Gastrocnemius medialis (tissue), 4 donors: ENCODE measurements at regions of chr6 and their contacts with region 1.

Region 1: DNA sequence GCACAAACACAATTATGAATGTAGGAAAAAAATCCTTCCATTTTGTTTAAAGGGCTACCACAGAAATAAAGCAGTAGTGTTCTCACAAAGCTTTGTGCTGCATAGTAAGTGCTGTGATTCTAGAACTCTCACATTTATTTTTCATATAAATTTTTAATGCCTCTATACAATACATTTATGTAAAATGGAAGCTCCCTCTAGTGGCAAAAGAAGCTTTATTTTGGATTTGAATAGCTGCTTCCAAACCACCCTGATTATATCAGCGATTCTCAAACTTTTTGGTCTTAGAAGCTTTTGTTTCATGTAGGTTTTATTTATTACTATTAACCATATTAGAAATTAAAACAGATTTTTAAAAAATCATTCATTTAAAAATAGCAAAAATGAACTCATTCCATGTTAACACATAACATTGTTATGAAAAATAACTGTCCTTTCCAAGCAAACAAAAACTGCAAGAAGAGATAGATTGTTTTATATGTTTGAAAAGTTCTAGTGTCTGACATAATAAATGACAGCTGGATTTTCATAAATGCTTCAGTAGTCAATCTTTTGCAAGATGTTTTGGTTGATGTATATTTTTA is 38.4 kb downstream of the HS3ST5 start:
- DNase-seq: no peak
- ATAC-seq: no peak
- H3K4me3 ChIP-seq: no peak overlapping the region
- H3K27ac ChIP-seq: no peak overlapping the region
- H3K4me1 ChIP-seq: peaks cover 0 to 4% of the 10 kb centered on the region in 2 donors
- H3K27me3 ChIP-seq: no peaks in the 10 kb centered on the region
- CTCF ChIP-seq: peak; percentile 26 to 56 (median 42)
- POLR2A ChIP-seq: no peak

Region 2: DNA sequence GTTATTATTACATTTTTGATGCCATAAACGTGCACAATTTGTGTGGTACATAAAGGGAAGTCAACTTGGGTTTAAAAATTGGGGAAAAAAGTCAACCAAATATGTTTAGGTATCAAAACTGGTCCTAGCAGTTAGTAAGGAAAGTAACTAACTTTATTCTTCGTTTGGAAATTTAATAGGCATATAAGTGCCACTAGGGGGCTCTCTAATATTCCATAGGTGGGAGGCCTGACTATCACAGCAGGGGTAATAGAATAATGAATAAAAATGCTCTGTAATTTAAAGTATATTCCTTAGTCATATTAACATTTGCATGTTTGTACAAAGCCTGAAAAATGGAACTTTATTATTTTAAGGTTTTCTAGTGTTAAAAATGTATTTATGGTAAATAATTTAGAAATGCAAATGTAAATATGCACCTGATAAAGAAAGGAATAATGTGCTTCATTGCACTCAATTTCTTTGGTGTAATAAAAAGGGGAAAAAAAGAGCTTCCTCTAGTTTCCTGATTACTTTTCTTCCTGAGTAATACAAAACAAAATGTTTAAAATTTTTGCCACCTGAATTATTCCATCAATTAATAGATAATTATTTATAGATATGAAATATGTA is 207.7 kb before region 1 on chr6:
- in situ Hi-C with region 1: loop called in 2 of 4 experiments (anchors 10 to 25 kb)
- intact Hi-C with region 1: loop called (anchors 1 kb)
- DNase-seq: no peak
- ATAC-seq: peak in 1 of 2 donors; percentile 55
- H3K4me3 ChIP-seq: no peak overlapping the region
- H3K27ac ChIP-seq: no peak overlapping the region
- H3K4me1 ChIP-seq: peaks cover 0 to 4% of the 10 kb centered on the region in 2 donors
- H3K27me3 ChIP-seq: no peaks in the 10 kb centered on the region
- CTCF ChIP-seq: peak; percentile 55 to 79 (median 60)
- POLR2A ChIP-seq: no peak

Region 3: GRCh38 chr6:114108119-114109002 is 196.0 kb before region 1 on chr6:
- in situ Hi-C with region 1: loop called in 1 of 4 experiments (anchors 10 kb)
- intact Hi-C with region 1: no loop called
- DNase-seq: peak in 1 of 2 donors; percentile 19
- ATAC-seq: no peak
- H3K4me3 ChIP-seq: no peak overlapping the region
- H3K27ac ChIP-seq: no peak overlapping the region
- H3K4me1 ChIP-seq: peaks cover 0 to 5% of the 10 kb centered on the region in 2 donors
- H3K27me3 ChIP-seq: no peaks in the 10 kb centered on the region
- CTCF ChIP-seq: peak in 1 of 5 experiments; percentile 37
- POLR2A ChIP-seq: no peak

Region 4: DNA sequence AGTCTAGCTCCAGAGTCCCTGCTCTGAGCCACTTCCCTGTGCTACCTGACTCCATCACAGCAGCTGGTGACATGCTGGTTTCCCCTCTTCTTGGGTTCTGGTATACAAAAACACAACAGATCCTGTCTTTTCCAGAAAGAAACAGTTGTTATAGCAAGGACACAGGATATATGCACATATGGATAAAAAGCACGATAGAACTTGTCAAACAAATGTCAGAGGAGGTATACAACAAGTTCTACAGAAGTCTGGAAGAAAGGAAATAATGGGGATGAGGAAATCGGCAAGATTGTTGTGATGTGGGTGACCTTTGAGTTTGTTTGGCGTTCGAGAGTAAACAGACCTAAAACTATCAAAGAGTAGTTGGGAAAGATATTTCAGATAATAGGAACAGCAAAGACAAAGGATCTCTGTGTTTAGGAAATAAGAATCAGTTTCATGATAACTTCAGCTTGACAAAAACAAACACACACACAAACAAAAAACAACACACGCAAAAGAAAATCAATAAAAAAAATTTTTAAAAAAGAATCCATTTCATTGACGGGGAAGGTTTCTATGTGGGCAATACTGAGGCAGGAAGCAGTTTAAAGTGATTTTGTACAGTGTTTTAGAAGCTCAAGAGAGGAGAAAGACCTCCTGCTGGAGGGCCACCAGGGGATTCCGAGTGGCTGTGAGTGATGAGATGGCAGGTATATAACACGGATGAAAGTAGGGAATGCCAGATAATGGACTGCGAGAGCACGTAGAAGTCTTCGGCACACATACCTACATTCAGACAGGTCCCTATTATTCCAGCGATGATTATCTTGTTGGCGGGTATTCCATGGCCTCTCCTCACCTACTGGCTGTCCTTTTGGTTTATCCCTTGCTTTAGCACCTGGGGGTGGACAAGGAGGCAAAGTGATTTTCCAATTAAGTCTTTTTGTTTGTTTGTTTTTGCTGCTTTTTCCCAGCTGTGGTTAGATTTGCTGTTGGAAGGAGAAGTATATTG is 136.5 kb before region 1 on chr6:
- in situ Hi-C with region 1: loop called in 1 of 4 experiments (anchors 25 kb)
- intact Hi-C with region 1: loop called (anchors 2 kb)
- DNase-seq: no peak
- ATAC-seq: no peak
- H3K4me3 ChIP-seq: no peak overlapping the region
- H3K27ac ChIP-seq: no peak overlapping the region
- H3K4me1 ChIP-seq: peaks cover 0 to 20% of the 10 kb centered on the region in 2 donors
- H3K27me3 ChIP-seq: no peaks in the 10 kb centered on the region
- CTCF ChIP-seq: no peak
- POLR2A ChIP-seq: no peak

Region 5: GRCh38 chr6:114181664-114182063 is 122.7 kb before region 1 on chr6:
- in situ Hi-C with region 1: no loop called
- intact Hi-C with region 1: no loop called
- DNase-seq: no peak
- ATAC-seq: no peak
- H3K4me3 ChIP-seq: no peak overlapping the region
- H3K27ac ChIP-seq: no peak overlapping the region
- H3K4me1 ChIP-seq: peaks cover 0 to 2% of the 10 kb centered on the region in 2 donors
- H3K27me3 ChIP-seq: no peaks in the 10 kb centered on the region
- CTCF ChIP-seq: no peak
- POLR2A ChIP-seq: no peak